ENCODE measurements at regions of chr11 and their contacts with region 1.

Region 1: GRCh38 chr11:5123802-5124521 is 14.2 kb downstream of the OR52A5 start:
- DNase-seq: peak; percentile 63 to 77
- H3K4me3 ChIP-seq: no peak overlapping the region
- H3K4me1 ChIP-seq: no peaks in the 10 kb centered on the region
- H3K27me3 ChIP-seq: 0 out of 2 replicates have a peak, but pooled peaks cover 2% of the 10 kb centered on the region

Region 2: GRCh38 chr11:4957396-4957795 is 166.6 kb before region 1 on chr11:
- in situ Hi-C with region 1: no loop called
- DNase-seq: no peak
- H3K4me3 ChIP-seq: no peak overlapping the region
- H3K4me1 ChIP-seq: no peaks in the 10 kb centered on the region
- H3K27me3 ChIP-seq: no peaks in the 10 kb centered on the region

Region 3: GRCh38 chr11:5380740-5381342 is 256.9 kb after region 1 on chr11:
- in situ Hi-C with region 1: loop called (anchors 10 kb)
- DNase-seq: peak; percentile 44 to 68
- H3K4me3 ChIP-seq: no peak overlapping the region
- H3K4me1 ChIP-seq: no peaks in the 10 kb centered on the region
- H3K27me3 ChIP-seq: no peaks in the 10 kb centered on the region

Region 4: GRCh38 chr11:5808500-5809121 is 684.6 kb after region 1 on chr11 and contains the start of gene OR52N2:
- in situ Hi-C with region 1: loop called (anchors 25 kb)
- DNase-seq: peak; percentile 67 to 82
- H3K4me3 ChIP-seq: peak within 1 kb of the TSS; percentile 12
- H3K4me1 ChIP-seq: no peaks in the 10 kb centered on the region
- H3K27me3 ChIP-seq: peaks cover 8% of the 10 kb centered on the region

Measured in HAP-1 (cell line).